ENCODE measurements at regions of chr18 and their contacts with region 1.

Region 1: GRCh38 chr18:23515911-23516546 is 12.7 kb downstream of the RMC1 start:
- DNase-seq: peak; percentile 71 to 80 (median 71)
- ATAC-seq: peak; percentile 97 to 99 (median 98)
- H3K4me3 ChIP-seq: no peak overlapping the region
- H3K27ac ChIP-seq: peak overlapping the region in 1 of 3 donors; percentile 68
- H3K4me1 ChIP-seq: peaks cover 0 to 15% (median 0%) of the 10 kb centered on the region in 4 donors
- H3K27me3 ChIP-seq: no peaks in the 10 kb centered on the region
- CTCF ChIP-seq: peak; percentile 80 to 94 (median 90)
- POLR2A ChIP-seq: no peak

Region 2: GRCh38 chr18:23586249-23587196 is 70.5 kb after region 1 on chr18 and contains the start of gene NPC1:
- intact Hi-C with region 1: loop called in 1 of 2 experiments (anchors 5 kb)
- DNase-seq: peak; percentile 95 to 97 (median 96)
- ATAC-seq: peak; percentile 90 to 98 (median 95)
- H3K4me3 ChIP-seq: peak within 1 kb of the TSS; percentile 73 to 90 (median 88)
- H3K27ac ChIP-seq: peak within 1 kb of the TSS; percentile 99 to 100 (median 99)
- H3K4me1 ChIP-seq: peaks cover 0 to 28% (median 10%) of the 10 kb centered on the region in 4 donors
- H3K27me3 ChIP-seq: no peaks in the 10 kb centered on the region
- CTCF ChIP-seq: peak; percentile 88 to 99 (median 96)
- POLR2A ChIP-seq: peak; percentile 97
- total RNA-seq, gene NPC1: 11.9 to 31.2 (median 20.0) TPM

Measured in right lobe of liver (tissue), 6 donors.